Right ventricle myocardium inferior (tissue), 1 donor: ENCODE measurements at regions of chr9 and their contacts with region 1.

Region 1: DNA sequence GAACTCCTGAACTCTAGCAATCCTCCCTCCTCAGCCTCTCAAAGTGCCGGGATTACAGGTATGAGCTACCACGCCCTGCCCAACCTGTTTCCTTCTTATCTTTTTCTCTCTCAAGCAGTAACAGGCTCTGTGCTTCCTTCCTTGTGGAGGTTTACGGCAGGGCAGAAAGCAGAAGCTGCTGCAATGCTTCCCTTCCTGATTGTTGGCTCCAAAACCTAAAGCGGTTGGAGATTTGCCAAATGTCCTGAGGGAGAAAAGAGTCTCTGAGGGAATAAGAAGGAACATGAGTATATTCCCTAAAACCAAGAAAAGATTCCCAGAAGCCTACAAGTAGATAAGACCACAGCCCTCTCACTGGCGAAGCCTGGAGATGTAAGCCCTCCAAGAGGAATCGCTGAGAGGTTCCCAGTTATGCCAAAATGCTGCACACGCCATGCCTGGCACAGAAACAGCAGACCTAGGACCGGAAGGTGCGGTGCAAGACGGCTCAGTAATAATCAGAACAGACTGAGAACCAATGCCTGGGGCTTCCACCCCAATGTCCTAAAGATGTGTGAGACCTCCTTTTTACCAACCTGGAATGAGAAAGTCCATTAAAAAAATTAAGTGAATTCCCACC is 73.2 kb downstream of the APTX start:
- DNase-seq: no peak
- ATAC-seq: no peak

Region 2: DNA sequence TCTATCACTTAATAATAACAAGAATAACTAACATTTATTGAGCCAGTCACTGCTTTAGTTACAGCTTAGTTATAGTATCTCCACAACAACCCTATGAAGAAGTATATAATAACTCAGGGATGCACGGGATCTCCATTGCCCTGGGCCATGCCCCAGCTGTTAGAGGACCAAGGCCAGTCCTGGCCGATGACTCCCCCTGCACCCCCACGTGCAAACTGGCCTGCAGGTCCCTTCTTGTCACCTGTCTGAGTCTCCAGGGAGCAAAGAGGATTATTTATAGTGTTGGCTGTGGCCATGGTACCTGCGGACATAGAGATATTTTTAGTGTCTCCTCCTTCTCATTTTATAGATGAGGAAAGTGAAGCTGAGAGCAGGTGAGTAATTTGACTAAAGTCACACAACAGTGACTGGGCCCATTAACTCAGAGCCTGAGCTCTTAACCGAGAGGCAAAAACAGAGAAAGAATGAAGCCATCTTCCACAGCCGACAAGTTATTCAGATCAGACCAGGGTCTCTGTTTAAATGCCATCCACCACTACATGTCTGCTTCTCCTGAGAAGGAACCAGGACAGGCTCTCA is 50.5 kb before region 1 on chr9:
- intact Hi-C with region 1: loop called (anchors 10 kb)
- DNase-seq: no peak
- ATAC-seq: no peak